ENCODE measurements at regions of chr9 and their contacts with region 1.

Region 1: DNA sequence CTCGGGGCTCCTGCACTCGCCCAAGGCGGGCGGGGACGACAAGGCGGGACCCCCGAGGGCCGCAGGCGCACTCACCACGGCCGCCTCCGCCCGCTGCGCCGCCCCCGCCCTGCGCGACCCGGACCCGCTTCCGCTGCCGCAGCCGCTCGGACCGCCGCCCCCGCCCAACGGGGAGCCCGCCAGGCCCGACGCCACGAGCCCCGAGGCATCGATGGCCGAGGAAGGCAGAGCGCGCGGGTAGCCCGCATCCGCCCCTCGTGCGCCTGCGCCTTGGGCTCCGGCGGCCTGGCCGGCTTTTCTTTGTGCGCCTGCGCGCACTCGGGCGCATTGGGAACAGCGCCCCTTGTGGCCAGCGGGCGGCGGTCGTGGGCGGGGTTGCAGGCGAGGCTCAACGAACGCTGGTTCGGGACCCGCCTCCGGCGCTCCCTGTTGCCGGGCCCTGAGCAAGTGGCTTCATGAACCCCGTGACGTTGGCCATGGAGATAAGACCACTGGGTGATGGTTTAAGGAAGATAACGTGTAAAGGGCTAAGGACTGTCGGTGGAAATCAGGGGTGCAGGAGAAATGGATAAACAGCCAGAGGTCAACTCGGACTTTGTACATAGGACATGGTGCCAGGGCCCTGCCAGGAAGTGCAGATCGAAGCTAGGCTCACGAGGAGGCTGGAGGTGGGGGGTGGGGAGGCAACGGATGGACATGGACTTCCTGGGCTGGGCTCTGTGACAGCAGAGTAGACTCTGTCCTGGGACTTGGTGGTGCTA is at the starts of genes C8G and FBXW5:
- DNase-seq: peak; percentile 59 to 96
- H3K4me3 ChIP-seq: peak within 1 kb of the TSS; percentile 88 to 90
- H3K27ac ChIP-seq: peak within 1 kb of the TSS; percentile 52 to 87
- H3K4me1 ChIP-seq: peaks cover 6 to 21% of the 10 kb centered on the region in 2 donors
- H3K27me3 ChIP-seq: no peaks in the 10 kb centered on the region
- CTCF ChIP-seq: peak; percentile 99
- total RNA-seq, gene C8G: 8.6 TPM
- total RNA-seq, gene FBXW5: 421 TPM

Region 2: DNA sequence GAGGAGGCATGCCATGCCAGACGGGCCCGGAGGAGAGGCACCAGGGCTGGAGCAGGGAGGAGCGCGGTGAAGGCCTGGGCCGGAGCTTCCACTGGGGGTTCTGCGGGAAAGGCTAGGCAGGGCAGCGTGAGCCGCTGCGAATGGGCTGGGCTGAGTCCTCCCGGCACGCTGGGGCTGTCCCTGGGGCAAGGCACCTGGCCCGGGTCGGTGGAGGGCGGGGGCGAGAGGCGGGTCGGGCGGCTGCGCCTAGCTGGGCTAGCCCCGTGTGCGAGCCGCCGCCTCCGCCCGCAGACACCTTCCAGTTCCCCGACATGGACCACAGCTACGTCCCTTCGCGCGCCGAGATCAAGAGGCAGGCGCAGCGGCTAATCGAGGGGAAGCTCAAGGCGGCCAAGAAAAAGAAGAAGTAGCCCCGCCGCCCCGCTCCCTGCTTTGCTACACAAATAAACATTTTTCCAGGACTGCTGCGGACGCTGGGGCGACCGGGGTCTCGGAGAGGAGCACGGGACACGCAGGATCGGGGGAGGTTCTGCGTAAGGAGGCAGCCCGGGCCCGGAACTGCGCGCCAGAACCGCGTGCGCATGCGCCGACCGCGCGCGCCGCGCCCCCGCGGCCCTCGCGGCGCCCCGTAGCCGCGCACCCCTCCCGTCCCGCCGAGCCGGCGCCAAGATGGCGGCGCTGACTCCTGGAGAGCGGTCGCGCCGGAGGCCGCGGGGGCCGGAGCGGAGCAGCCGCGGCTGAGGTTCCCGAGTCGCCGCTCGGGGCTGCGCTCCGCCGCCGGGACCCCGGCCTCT is 137.2 kb before region 1 on chr9 and contains the start of gene RABL6:
- intact Hi-C with region 1: loop called (anchors 5 kb)
- DNase-seq: peak in 1 of 2 donors; percentile 83
- H3K4me3 ChIP-seq: peak within 1 kb of the TSS; percentile 97 to 100
- H3K27ac ChIP-seq: peak within 1 kb of the TSS; percentile 66 to 86
- H3K4me1 ChIP-seq: peaks cover 15 to 23% of the 10 kb centered on the region in 2 donors
- H3K27me3 ChIP-seq: no peaks in the 10 kb centered on the region
- CTCF ChIP-seq: peak in 1 of 3 experiments; percentile 10
- total RNA-seq, gene RABL6: 70.9 TPM

Region 3: DNA sequence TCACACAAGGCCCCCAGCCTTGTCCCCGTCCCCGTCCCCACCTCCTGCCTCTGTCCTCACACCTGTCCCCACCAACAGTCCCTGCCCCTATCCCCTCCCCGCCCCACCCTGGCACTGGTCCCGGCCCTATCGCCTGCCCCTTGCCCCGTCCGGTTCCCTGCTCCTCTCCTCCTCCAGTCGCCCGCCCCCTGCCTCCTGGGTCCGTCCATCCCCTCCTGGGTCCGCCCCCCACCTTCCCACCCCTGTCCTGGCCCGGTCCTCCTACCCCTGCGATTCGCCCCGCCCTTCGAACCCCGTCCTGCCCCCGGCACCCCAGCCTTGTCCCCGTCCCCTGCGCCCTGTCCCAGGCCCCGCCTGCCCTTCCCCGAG is 79.0 kb before region 1 on chr9:
- intact Hi-C with region 1: loop called (anchors 1 kb)
- DNase-seq: no peak
- H3K4me3 ChIP-seq: peak overlapping the region; percentile 81 to 97
- H3K27ac ChIP-seq: peak overlapping the region; percentile 86 to 91
- H3K4me1 ChIP-seq: peaks cover 5 to 15% of the 10 kb centered on the region in 2 donors
- H3K27me3 ChIP-seq: no peaks in the 10 kb centered on the region
- CTCF ChIP-seq: no peak

Region 4: DNA sequence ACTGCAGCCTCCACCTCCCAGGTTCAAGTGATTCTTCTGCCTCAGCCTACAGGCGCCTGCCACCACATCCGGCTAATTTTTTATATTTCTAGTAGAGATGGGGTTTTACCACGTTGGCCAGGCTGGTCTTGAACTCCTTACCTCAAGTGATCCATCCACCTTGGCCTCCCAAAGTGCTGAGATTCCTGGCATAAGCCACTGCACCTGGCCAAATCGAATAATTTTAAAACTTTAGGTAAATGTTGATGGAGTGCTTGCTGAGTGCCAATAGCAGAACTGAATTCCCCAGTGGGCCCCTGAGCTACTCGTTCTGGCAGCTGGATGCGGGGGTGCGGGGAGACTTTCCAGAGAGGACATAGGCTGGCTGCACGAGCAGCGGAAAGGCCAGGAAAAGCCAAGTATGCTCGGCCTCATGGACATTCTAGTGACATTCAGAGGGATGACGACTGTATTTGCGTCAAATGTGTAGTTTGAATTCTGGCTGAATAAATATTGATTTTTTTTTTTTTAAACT is 41.6 kb before region 1 on chr9:
- intact Hi-C with region 1: loop called (anchors 1 kb)
- DNase-seq: peak in 1 of 2 donors; percentile 82
- H3K4me3 ChIP-seq: no peak overlapping the region
- H3K27ac ChIP-seq: peak overlapping the region; percentile 75 to 80
- H3K4me1 ChIP-seq: peaks cover 8 to 17% of the 10 kb centered on the region in 2 donors
- H3K27me3 ChIP-seq: no peaks in the 10 kb centered on the region
- CTCF ChIP-seq: no peak

Region 5: GRCh38 chr9:137086531-137087408 is 142.1 kb after region 1 on chr9 and contains the start of gene MAN1B1:
- intact Hi-C with region 1: loop called (anchors 1 kb)
- DNase-seq: peak; percentile 94 to 98
- H3K4me3 ChIP-seq: peak within 1 kb of the TSS; percentile 74 to 99
- H3K27ac ChIP-seq: peak within 1 kb of the TSS; percentile 91 to 96
- H3K4me1 ChIP-seq: peaks cover 12 to 17% of the 10 kb centered on the region in 2 donors
- H3K27me3 ChIP-seq: no peaks in the 10 kb centered on the region
- CTCF ChIP-seq: no peak
- total RNA-seq, gene MAN1B1: 85.3 TPM